Left colon (tissue), 2 donors: ENCODE measurements at regions of chr10 and their contacts with region 1.

Region 1: DNA sequence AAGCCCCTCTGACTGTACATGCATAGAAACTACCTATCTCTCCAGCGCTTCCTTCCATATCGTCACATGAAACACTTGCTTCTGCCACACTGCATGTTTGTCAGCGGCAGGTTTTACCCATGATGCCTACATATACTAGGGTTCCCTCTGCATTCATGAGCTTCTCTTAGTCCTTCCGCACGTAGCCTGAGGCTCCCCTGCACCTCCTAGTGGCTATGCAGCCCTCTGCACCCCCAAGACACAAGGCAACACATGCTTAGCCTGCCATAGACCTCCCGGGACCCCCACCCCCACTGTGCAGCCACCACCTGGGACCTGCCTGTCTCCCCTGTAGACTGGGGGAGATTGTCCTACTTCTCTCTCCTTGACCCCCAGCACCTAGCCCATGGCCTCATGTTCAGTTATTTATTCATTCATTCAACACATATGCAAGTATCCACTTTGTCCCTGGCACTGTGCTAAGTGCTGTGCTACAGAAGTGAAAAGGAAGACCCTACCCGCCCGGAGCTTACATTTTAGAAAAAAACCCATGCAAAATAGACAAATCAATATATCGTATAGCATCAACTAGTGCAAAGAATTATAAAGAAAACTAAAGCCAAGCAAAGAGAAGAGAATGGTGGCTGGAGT is 23.5 kb downstream of the TMEM273 start:
- DNase-seq: peak in 1 of 2 donors; percentile 39
- ATAC-seq: peak; percentile 68

Region 2: GRCh38 chr10:48926764-48927540 is 237.7 kb before region 1 on chr10:
- intact Hi-C with region 1: no loop called
- DNase-seq: no peak
- ATAC-seq: no peak

Region 3: DNA sequence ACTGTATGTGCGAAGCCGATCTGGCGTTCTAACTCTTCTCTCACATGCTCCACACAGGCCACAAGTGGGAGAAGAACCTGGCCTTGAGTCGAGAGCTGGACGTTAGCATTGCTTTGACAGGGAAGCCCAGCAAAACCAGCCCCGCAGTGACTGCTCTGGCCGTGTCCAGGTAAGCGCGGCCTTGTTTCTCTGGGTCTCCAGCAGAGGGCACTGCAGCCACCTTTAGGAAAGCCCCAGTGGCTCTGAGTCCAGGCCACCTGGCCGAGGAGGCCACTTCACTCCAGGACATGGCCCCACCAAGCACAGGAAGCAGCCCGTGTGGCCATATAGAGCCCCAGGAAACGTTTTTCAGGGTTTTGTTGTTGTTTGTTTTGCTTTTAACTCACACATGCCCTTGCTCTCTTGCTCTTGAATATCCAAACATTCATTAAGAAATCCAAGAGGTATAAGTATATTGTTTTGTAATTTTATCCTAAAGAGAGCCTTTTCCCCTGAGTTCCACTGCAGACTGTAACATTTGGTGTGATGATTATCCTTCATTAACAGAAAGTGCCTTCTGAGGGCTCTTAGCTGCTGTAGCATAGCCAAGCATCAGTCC is 183.3 kb before region 1 on chr10:
- intact Hi-C with region 1: loop called in 1 of 2 experiments (anchors 10 kb)
- DNase-seq: peak in 1 of 2 donors; percentile 48
- ATAC-seq: peak; percentile 70

Region 4: GRCh38 chr10:49362596-49363260 is 198.1 kb after region 1 on chr10:
- intact Hi-C with region 1: no loop called
- DNase-seq: no peak
- ATAC-seq: no peak